ENCODE measurements at regions of chr22 and their contacts with region 1.

Region 1: GRCh38 chr22:40436505-40437451 is 66.4 kb downstream of the SGSM3 start:
- DNase-seq: peak; percentile 81 to 91 (median 88)
- H3K4me3 ChIP-seq: peak overlapping the region in 6 of 7 experiments; percentile 27 to 68 (median 41)
- H3K27ac ChIP-seq: peak overlapping the region; percentile 34 to 71
- H3K4me1 ChIP-seq: peaks cover 29 to 59% (median 47%) of the 10 kb centered on the region in 4 experiments
- H3K27me3 ChIP-seq: no peaks in the 10 kb centered on the region

Region 2: GRCh38 chr22:40449676-40450035 is 12.9 kb after region 1 on chr22:
- CTCF ChIA-PET with region 1: interaction called, 21 read pairs
- POLR2A ChIA-PET with region 1: no interaction called
- DNase-seq: no peak
- H3K4me3 ChIP-seq: no peak overlapping the region
- H3K27ac ChIP-seq: no peak overlapping the region
- H3K4me1 ChIP-seq: peaks cover 0 to 26% (median 0%) of the 10 kb centered on the region in 4 experiments
- H3K27me3 ChIP-seq: no peaks in the 10 kb centered on the region

Region 3: GRCh38 chr22:40479126-40479800 is 42.5 kb after region 1 on chr22:
- CTCF ChIA-PET with region 1: interaction called, 95 read pairs
- POLR2A ChIA-PET with region 1: no interaction called
- DNase-seq: no peak
- H3K4me3 ChIP-seq: no peak overlapping the region
- H3K27ac ChIP-seq: no peak overlapping the region
- H3K4me1 ChIP-seq: peaks cover 0 to 33% (median 8%) of the 10 kb centered on the region in 4 experiments
- H3K27me3 ChIP-seq: no peaks in the 10 kb centered on the region

Region 4: DNA sequence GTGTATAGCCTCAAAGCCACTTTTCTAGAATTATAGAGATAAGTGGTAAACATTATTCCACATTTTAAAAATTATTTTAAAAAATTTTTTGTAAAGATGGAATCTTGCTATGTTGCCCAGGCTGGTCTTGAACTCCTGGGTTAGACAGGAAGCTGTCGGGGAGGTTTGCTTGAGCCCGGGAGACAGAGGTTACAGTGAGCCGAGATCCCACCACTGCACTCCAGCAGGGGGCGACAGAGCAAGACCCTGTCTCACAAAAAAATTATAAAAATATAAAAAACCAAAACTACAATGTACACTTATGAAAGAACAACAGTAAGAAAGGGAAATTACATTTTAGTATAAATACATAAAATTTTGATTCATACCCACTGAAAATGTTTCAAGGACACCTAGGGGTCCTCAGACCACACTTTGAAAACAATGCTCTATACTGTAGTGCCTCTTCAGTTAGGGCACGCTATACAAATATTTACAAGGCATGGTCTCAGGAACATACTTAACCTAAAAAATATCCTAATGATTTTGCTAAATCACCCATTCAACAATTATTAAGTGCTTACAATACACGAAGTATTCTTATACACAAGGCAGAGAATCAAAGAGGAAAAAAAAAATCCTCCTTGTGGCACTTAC is 88.6 kb after region 1 on chr22:
- CTCF ChIA-PET with region 1: interaction called, 14 read pairs
- POLR2A ChIA-PET with region 1: interaction called, 3 read pairs
- DNase-seq: peak; percentile 68 to 87 (median 85)
- H3K4me3 ChIP-seq: no peak overlapping the region
- H3K27ac ChIP-seq: no peak overlapping the region
- H3K4me1 ChIP-seq: no peaks in the 10 kb centered on the region
- H3K27me3 ChIP-seq: no peaks in the 10 kb centered on the region